ENCODE measurements at regions of chr11 and their contacts with region 1.

Region 1: GRCh38 chr11:65506770-65507505 is 8.1 kb downstream of the MALAT1 start:
- DNase-seq: no peak
- H3K4me3 ChIP-seq: peak overlapping the region; percentile 23; the same call in 1 of the 2 replicates
- H3K27ac ChIP-seq: peak overlapping the region; percentile 97
- H3K4me1 ChIP-seq: peaks cover 56% of the 10 kb centered on the region
- H3K27me3 ChIP-seq: no peaks in the 10 kb centered on the region
- CTCF ChIP-seq: no peak

Region 2: GRCh38 chr11:65366340-65366773 is 140.6 kb before region 1 on chr11:
- CTCF ChIA-PET with region 1: interaction called, 4 read pairs
- POLR2A ChIA-PET with region 1: interaction called, 19 read pairs
- intact Hi-C with region 1: loop called (anchors 1 kb)
- DNase-seq: peak; percentile 55 to 71
- H3K4me3 ChIP-seq: no peak overlapping the region
- H3K27ac ChIP-seq: no peak overlapping the region
- H3K4me1 ChIP-seq: peaks cover 9% of the 10 kb centered on the region
- H3K27me3 ChIP-seq: no peaks in the 10 kb centered on the region
- CTCF ChIP-seq: peak; percentile 92

Region 3: DNA sequence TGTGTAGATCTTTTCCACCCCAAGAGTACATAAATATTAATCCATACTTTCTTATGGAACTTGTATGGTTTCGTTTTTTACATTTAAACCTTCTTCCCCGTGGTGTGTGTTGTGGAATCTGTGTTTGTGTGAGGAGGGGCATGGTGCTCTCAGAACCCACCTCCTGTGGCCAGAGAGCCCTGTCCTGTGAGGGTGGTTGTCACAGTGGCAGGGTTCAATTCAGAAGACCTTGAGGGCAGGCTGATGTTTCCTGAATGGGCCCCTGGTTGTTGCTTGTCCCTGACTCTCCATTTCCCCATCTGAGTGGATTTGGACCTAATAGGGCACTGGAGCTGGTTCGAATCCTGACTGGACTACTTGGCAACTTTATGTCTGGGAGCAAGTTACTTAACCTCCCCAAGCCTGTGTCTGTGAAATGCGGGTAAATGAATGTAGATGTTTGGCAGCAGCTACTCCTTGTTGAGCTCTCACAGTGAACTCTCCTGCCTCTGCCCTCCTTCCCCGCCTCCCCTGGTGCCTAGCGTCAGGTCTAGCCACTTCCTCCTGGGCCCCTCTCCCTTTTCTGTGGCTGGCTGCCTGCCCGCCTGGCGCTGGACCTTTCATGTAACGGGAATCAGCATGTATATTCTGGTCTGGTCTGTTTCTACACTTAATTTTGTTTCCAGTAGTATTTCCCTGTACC is 77.1 kb before region 1 on chr11:
- CTCF ChIA-PET with region 1: interaction called, 10 read pairs
- POLR2A ChIA-PET with region 1: interaction called, 11 read pairs
- intact Hi-C with region 1: no loop called
- DNase-seq: peak in 1 of 2 experiments; percentile 56
- H3K4me3 ChIP-seq: no peak overlapping the region
- H3K27ac ChIP-seq: peak overlapping the region; percentile 100
- H3K4me1 ChIP-seq: peaks cover 54% of the 10 kb centered on the region
- H3K27me3 ChIP-seq: no peaks in the 10 kb centered on the region
- CTCF ChIP-seq: no peak

Region 4: GRCh38 chr11:65448418-65449105 is 58.4 kb before region 1 on chr11:
- CTCF ChIA-PET with region 1: no interaction called
- POLR2A ChIA-PET with region 1: interaction called, 13 read pairs
- intact Hi-C with region 1: loop called (anchors 2 kb)
- DNase-seq: peak in 1 of 2 experiments; percentile 34
- H3K4me3 ChIP-seq: no peak overlapping the region
- H3K27ac ChIP-seq: no peak overlapping the region
- H3K4me1 ChIP-seq: peaks cover 11% of the 10 kb centered on the region
- H3K27me3 ChIP-seq: no peaks in the 10 kb centered on the region
- CTCF ChIP-seq: no peak

Region 5: DNA sequence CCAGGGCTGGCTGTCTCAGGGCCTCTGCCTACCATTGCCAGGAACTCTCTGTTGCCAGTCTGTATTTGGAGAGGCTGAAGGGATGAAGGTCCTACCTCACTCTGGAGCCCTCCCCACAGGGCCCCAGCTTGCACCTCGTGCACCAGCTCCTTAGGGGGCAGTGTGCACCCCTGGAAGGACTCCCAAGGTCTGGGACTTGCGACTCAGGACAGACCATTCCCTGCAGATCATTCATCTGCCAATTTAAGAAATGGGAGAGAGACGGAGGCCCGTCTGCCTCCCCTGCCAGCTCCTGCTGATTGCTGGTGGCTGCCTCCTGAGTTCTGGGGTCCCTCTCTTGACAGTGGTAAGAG is 35.6 kb before region 1 on chr11:
- CTCF ChIA-PET with region 1: interaction called, 43 read pairs
- POLR2A ChIA-PET with region 1: interaction called, 84 read pairs
- intact Hi-C with region 1: loop called (anchors 1 kb)
- DNase-seq: peak; percentile 61 to 78
- H3K4me3 ChIP-seq: no peak overlapping the region
- H3K27ac ChIP-seq: peak overlapping the region; percentile 95
- H3K4me1 ChIP-seq: peaks cover 66% of the 10 kb centered on the region
- H3K27me3 ChIP-seq: no peaks in the 10 kb centered on the region
- CTCF ChIP-seq: peak; percentile 61

Region 6: DNA sequence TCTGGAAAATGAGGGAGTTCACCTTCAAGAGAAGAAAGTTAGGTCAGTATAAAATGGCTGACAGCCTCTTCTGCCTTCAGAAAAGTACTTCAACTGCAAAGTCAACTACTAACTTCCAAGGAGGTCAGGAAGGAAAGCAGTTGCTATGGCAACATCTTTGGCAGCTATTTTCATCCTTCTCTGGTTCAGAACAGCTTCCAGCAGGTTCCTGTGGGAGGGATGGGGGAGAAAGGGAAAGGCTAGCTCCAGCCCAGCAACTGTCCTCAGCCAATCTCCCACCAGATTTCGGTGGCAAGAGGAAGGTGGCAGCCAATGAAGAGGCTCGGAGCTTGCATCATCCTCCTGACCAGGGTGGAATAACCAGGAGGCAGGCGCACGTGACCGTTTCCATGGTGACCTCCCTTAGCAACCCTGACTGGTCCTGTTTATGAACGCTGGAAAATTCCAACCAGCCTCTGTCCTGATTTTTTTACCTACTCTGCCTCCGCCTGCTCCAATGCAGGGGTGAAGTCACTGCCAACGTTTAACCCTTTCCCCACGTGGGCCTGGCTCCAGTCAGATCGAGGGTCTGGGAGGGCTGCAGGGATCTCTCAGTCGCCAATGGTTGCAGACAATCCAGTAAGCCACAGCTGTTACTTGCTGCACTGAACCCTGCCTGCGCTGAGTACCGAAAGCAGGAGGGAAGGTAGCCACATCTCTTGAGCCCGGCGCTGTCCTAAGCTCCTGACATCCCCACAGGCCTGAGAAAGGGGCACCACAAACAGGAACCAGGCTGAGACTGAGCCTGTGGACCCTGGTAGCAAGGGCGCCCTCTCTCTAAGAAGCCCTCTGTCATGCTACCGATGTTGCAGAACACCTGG is 19.3 kb before region 1 on chr11:
- CTCF ChIA-PET with region 1: interaction called, 7 read pairs
- POLR2A ChIA-PET with region 1: interaction called, 42 read pairs
- intact Hi-C with region 1: loop called (anchors 1 kb)
- DNase-seq: peak; percentile 98 to 99
- H3K4me3 ChIP-seq: no peak overlapping the region
- H3K27ac ChIP-seq: peak overlapping the region; percentile 88
- H3K4me1 ChIP-seq: peaks cover 79% of the 10 kb centered on the region
- H3K27me3 ChIP-seq: no peaks in the 10 kb centered on the region
- CTCF ChIP-seq: no peak

Region 7: GRCh38 chr11:65540297-65541092 is 33.6 kb after region 1 on chr11:
- CTCF ChIA-PET with region 1: no interaction called
- POLR2A ChIA-PET with region 1: interaction called, 14 read pairs
- intact Hi-C with region 1: no loop called
- DNase-seq: peak; percentile 66 to 90
- H3K4me3 ChIP-seq: peak overlapping the region; percentile 46; the same call in 1 of the 2 replicates
- H3K27ac ChIP-seq: no peak overlapping the region
- H3K4me1 ChIP-seq: peaks cover 17% of the 10 kb centered on the region
- H3K27me3 ChIP-seq: no peaks in the 10 kb centered on the region
- CTCF ChIP-seq: peak; percentile 95